ENCODE measurements at regions of chr6 and their contacts with region 1.

Region 1: GRCh38 chr6:153108315-153108714 is 22.8 kb downstream of the RGS17 start:
- DNase-seq: no peak
- ATAC-seq: no peak

Region 2: GRCh38 chr6:153059761-153060160 is 48.6 kb before region 1 on chr6:
- intact Hi-C with region 1: loop called (anchors 5 kb)
- DNase-seq: no peak
- ATAC-seq: no peak

Region 3: GRCh38 chr6:153183925-153184324 is 75.6 kb after region 1 on chr6:
- intact Hi-C with region 1: no loop called
- DNase-seq: no peak
- ATAC-seq: no peak